Activated T-helper 2 cell treated with anti-CD3 and anti-CD28 coated beads, Interferon-gamma antibody, Interleukin-2, Interleukin-4, amounts not matched to agents 10 μg/mL and 5 μg/mL and 100 μg/mL, durations not matched to agents 14 hours and 24 hours and 36 hours (primary cell): ENCODE measurements at regions of chr13 and their contacts with region 1.

Region 1: GRCh38 chr13:49792550-49793324 is at the start of gene KPNA3:
- DNase-seq: peak; percentile 93
- H3K4me3 Mint-ChIP-seq: peak within 1 kb of the TSS; percentile 92
- H3K27ac Mint-ChIP-seq: peak within 1 kb of the TSS; percentile 97
- H3K4me1 Mint-ChIP-seq: peaks cover 29% of the 10 kb centered on the region
- H3K27me3 Mint-ChIP-seq: peaks cover 4% of the 10 kb centered on the region
- total RNA-seq, gene KPNA3: 46.1 and 49.0 TPM in 2 replicates

Region 2: GRCh38 chr13:49247643-49248621 is 544.8 kb before region 1 on chr13 and contains the start of gene CDADC1:
- intact Hi-C with region 1: loop called (anchors 5 kb)
- DNase-seq: peak; percentile 88
- H3K4me3 Mint-ChIP-seq: peak within 1 kb of the TSS; percentile 93
- H3K27ac Mint-ChIP-seq: peak within 1 kb of the TSS; percentile 96
- H3K4me1 Mint-ChIP-seq: peaks cover 26% of the 10 kb centered on the region
- H3K27me3 Mint-ChIP-seq: peaks cover 11% of the 10 kb centered on the region
- total RNA-seq, gene CDADC1: 7.4 and 8.6 TPM in 2 replicates

Region 3: GRCh38 chr13:49690992-49691886 is 101.5 kb before region 1 on chr13 and contains the start of gene EBPL:
- intact Hi-C with region 1: loop called (anchors 2 kb)
- DNase-seq: peak; percentile 81
- H3K4me3 Mint-ChIP-seq: peak within 1 kb of the TSS; percentile 94
- H3K27ac Mint-ChIP-seq: peak within 1 kb of the TSS; percentile 67
- H3K4me1 Mint-ChIP-seq: peaks cover 30% of the 10 kb centered on the region
- H3K27me3 Mint-ChIP-seq: no peaks in the 10 kb centered on the region
- total RNA-seq, gene EBPL: 42.7 and 47.5 TPM in 2 replicates

Region 4: DNA sequence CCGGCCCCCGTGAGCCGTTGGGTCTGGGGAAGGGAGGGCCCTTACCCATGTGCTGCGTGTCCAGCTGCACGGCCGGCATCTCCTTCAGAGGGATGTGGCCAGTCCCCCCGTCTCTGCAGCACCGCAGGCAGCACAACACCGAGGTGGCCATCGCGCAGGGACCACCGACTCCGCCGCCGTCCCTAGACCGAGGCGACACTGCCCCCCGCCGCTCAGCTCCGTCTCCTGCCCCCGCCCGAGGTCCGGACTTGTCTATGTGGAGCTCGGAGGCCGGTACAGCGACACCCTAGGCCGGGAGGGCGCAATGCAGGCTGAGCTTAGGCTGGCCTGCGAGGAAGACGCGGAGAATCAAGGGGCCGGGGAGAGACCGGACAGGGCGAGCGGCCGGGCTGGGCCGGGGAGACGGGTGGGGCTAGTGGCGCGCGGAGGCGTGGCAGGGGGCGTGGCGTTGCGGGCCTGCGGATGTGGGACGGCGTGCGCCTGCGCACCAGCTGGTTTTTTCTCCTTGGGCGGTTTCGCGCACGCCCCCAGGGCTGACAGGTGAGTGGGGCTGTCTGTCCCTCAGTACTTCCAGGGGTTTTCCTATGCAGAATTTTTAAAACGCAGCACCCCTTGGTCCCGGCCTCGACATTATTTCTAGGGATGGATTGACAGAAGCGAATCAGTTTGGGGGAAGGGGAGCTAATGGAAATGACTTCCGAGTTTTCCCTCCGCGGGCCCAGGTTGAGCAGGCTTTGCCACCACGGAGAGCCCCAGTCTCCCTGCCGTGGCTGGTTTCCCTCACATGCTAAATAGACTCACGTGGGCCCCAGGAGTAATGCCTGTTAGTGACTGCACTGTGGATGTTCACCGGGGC is 143.6 kb after region 1 on chr13 and contains the start of gene SPRYD7:
- intact Hi-C with region 1: loop called (anchors 2 kb)
- DNase-seq: peak; percentile 92
- H3K4me3 Mint-ChIP-seq: peak within 1 kb of the TSS; percentile 85
- H3K27ac Mint-ChIP-seq: peak within 1 kb of the TSS; percentile 84
- H3K4me1 Mint-ChIP-seq: peaks cover 9% of the 10 kb centered on the region
- H3K27me3 Mint-ChIP-seq: peaks cover 4% of the 10 kb centered on the region
- total RNA-seq, gene SPRYD7: 8.7 and 9.8 TPM in 2 replicates

Region 5: GRCh38 chr13:50123862-50124536 is 331.3 kb after region 1 on chr13:
- intact Hi-C with region 1: loop called (anchors 2 kb)
- DNase-seq: peak; percentile 58
- H3K4me3 Mint-ChIP-seq: peak overlapping the region; percentile 78
- H3K27ac Mint-ChIP-seq: peak overlapping the region; percentile 80
- H3K4me1 Mint-ChIP-seq: peaks cover 32% of the 10 kb centered on the region
- H3K27me3 Mint-ChIP-seq: peaks cover 29% of the 10 kb centered on the region